A549 (cell line): ENCODE measurements at regions of chr19 and their contacts with region 1.

Region 1: DNA sequence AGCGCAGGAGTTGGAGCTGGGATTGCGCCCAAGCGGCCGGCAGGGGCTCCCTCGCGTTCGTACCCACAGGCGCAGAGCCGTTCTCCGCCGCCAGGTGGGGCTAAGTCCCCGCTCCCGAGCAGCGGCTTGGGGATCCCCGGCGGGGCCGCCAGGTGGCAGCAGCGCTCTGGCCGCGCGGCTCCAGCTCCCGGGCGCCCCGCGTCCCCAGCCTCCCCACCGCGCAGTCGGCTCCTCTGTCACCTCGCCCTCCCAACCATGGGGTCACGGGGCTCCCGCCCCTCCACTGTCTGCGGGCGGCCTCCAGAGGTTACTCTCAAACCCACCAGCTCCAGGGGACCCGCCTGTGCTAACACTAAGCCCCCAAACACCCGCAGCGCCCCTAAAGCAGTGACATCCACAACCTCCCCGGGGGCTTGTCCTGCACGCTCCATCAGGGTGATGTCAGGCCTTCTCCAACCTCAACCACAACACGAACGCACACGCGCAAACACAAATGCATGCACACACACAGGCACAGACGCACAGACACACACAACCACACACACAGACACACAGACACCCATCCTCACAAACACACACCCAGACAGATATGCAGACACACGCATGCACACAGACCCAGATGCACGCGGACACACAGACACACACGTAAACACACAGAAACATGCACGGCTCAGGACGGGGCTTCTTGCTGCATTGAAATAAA is 18.4 kb upstream of the KCTD15 start:
- DNase-seq: peak; percentile 85 to 96
- ATAC-seq: peak; percentile 61 to 85
- H3K4me3 ChIP-seq: peak overlapping the region; percentile 42
- H3K27ac ChIP-seq: peak overlapping the region in 1 of 2 experiments; percentile 42; a peak in 2 of 6 replicates
- H3K4me1 ChIP-seq: peaks cover 27% of the 10 kb centered on the region
- CTCF ChIP-seq: peak; percentile 100
- EP300 ChIP-seq: no peak
- POLR2A ChIP-seq: no peak
- RAD21 ChIP-seq: peak; percentile 100

Region 2: DNA sequence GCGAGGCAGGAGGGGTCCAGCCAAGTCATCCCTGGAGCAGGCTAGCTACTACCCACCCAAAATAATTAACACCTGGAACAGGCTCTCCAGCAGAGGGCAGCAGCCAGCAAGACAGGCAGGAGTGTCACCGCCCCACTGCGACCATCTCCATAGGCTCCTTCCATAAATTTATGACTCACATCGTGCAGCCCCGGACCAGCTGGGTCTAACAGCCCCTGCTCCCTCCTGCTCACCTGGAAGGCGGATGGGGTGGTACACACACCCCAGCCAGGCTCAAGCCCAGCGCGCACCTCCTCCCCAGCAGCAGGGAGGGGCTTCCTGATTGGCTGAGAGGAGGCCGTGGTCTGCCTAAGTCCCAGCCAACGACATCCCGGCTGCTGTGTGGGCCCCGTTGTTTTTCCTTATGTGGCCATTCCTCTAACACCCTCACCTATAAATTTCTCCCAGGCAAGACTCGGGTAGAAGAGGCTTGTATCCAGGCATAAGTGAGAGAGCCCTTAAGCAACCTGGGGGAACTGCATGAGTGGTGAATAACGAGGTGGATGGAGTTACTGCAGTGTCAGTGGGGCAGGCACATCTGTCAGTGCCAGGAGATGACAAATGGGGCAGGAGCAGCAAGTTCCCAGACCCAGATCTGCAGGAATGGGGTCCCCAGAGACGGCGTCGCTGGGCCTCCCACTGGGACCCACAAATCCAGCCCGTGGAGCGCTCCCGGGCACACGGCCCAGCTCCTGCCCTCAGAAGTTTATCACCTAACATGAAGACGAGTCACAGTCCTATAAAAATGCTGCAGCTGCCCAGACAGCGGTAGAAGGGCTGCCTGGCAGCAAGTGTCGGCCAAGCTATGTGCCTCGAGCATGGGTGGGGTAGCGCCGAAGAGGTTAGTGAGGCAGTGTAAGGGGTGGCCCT is 361.7 kb before region 1 on chr19:
- CTCF ChIA-PET with region 1: interaction called, 455 read pairs
- POLR2A ChIA-PET with region 1: no interaction called
- DNase-seq: peak; percentile 84 to 99
- ATAC-seq: peak; percentile 64 to 92
- H3K4me3 ChIP-seq: no peak overlapping the region
- H3K27ac ChIP-seq: no peak overlapping the region
- H3K4me1 ChIP-seq: no peaks in the 10 kb centered on the region
- CTCF ChIP-seq: peak; percentile 98
- EP300 ChIP-seq: no peak
- POLR2A ChIP-seq: no peak
- RAD21 ChIP-seq: peak; percentile 85 to 91

Region 3: DNA sequence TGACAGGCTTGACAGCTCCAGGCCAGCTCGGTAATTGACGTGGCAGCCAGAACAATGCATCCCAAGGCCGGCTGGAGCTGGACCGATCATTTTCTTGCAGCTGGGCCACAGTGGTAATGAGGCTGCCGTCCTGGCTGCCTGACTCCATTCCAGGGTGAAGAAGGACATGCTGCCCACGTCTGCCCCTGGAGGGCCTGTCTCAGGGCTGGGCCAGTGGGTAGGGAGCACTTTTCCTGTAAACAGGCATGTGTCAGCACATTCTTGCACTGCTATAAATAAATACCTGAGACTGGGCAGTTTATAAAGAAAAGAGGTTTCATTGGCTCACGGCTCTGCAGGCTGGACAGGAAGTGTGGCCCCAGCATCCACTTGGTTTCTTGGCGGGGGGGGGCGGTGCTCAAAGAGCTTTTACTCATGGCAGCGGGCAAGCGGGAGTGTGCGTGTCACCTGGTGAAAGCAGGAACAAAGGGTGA is 19.7 kb before region 1 on chr19:
- CTCF ChIA-PET with region 1: interaction called, 147 read pairs
- POLR2A ChIA-PET with region 1: no interaction called
- DNase-seq: peak in 1 of 2 experiments; percentile 57
- ATAC-seq: peak; percentile 1 to 42; a peak in 3 of 6 replicates
- H3K4me3 ChIP-seq: no peak overlapping the region
- H3K27ac ChIP-seq: no peak overlapping the region
- H3K4me1 ChIP-seq: peaks cover 4% of the 10 kb centered on the region; the same call in 1 of the 3 replicates
- CTCF ChIP-seq: no peak
- EP300 ChIP-seq: no peak
- POLR2A ChIP-seq: no peak
- RAD21 ChIP-seq: no peak

Region 4: GRCh38 chr19:33868788-33869412 is 90.7 kb after region 1 on chr19:
- CTCF ChIA-PET with region 1: interaction called, 19 read pairs
- POLR2A ChIA-PET with region 1: no interaction called
- DNase-seq: no peak
- ATAC-seq: peak; percentile 39 to 74; a peak in 5 of 6 replicates
- H3K4me3 ChIP-seq: no peak overlapping the region
- H3K27ac ChIP-seq: no peak overlapping the region
- H3K4me1 ChIP-seq: no peaks in the 10 kb centered on the region
- CTCF ChIP-seq: no peak
- EP300 ChIP-seq: no peak
- POLR2A ChIP-seq: no peak
- RAD21 ChIP-seq: no peak

Region 5: GRCh38 chr19:33988586-33988985 is 210.3 kb after region 1 on chr19:
- CTCF ChIA-PET with region 1: interaction called, 88 read pairs
- POLR2A ChIA-PET with region 1: no interaction called
- DNase-seq: no peak
- ATAC-seq: no peak
- H3K4me3 ChIP-seq: no peak overlapping the region
- H3K27ac ChIP-seq: no peak overlapping the region
- H3K4me1 ChIP-seq: no peaks in the 10 kb centered on the region
- CTCF ChIP-seq: no peak
- EP300 ChIP-seq: no peak
- POLR2A ChIP-seq: no peak
- RAD21 ChIP-seq: no peak

Region 6: GRCh38 chr19:34096020-34096915 is 318.0 kb after region 1 on chr19:
- CTCF ChIA-PET with region 1: interaction called, 510 read pairs
- POLR2A ChIA-PET with region 1: interaction called, 12 read pairs
- DNase-seq: peak; percentile 78 to 79
- ATAC-seq: peak; percentile 78 to 91
- H3K4me3 ChIP-seq: no peak overlapping the region; the same call in 2 of the 3 replicates
- H3K27ac ChIP-seq: no peak overlapping the region
- H3K4me1 ChIP-seq: no peaks in the 10 kb centered on the region
- CTCF ChIP-seq: peak; percentile 99
- EP300 ChIP-seq: no peak
- POLR2A ChIP-seq: no peak
- RAD21 ChIP-seq: peak; percentile 97

Region 7: GRCh38 chr19:34220472-34221063 is 442.3 kb after region 1 on chr19:
- CTCF ChIA-PET with region 1: interaction called, 31 read pairs
- POLR2A ChIA-PET with region 1: no interaction called
- DNase-seq: peak; percentile 87 to 88
- ATAC-seq: peak; percentile 83 to 84
- H3K4me3 ChIP-seq: no peak overlapping the region
- H3K27ac ChIP-seq: no peak overlapping the region
- H3K4me1 ChIP-seq: peaks cover 27% of the 10 kb centered on the region
- CTCF ChIP-seq: peak; percentile 99
- EP300 ChIP-seq: no peak
- POLR2A ChIP-seq: no peak
- RAD21 ChIP-seq: peak; percentile 74 to 85